MCF 10A (cell line): ENCODE measurements at regions of chr14 and their contacts with region 1.

Region 1: DNA sequence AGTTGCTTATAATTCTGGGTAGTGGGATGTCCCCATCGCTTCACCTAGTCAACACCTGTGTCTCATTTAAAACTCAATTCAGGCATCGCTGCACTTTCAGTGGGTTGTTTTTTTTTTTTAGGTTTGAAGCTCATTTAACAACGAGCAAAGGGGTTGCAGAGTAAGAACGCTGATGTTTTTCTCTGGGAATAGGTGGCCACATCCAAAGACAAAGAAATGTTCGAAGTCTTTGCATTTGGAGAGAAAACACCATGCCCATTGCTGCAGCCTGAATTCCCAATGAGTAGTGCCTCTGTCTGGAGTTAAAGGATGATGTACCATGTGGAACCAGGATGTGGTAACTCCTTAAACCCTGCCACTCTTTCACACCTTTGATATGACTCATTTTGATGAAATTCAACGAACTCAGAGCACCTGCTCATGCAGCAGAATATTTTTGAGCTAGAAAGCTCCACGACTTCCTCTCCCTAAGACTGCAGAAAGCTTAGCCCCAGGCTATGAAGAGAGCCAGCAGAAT is 35.1 kb upstream of the BATF start:
- DNase-seq: peak; percentile 72
- H3K4me3 Mint-ChIP-seq: no peak overlapping the region
- H3K27ac Mint-ChIP-seq: no peak overlapping the region
- H3K4me1 Mint-ChIP-seq: peaks cover 23% of the 10 kb centered on the region
- H3K27me3 Mint-ChIP-seq: no peaks in the 10 kb centered on the region
- CTCF ChIP-seq: no peak

Region 2: GRCh38 chr14:75126679-75127473 is 360.3 kb before region 1 on chr14 and contains the start of gene NEK9:
- CTCF ChIA-PET with region 1: interaction called, 10 read pairs
- POLR2A ChIA-PET with region 1: no interaction called
- intact Hi-C with region 1: loop called (anchors 10 kb)
- DNase-seq: peak; percentile 88
- H3K4me3 Mint-ChIP-seq: peak within 1 kb of the TSS; percentile 72
- H3K27ac Mint-ChIP-seq: peak within 1 kb of the TSS; percentile 99
- H3K4me1 Mint-ChIP-seq: peaks cover 33% of the 10 kb centered on the region
- H3K27me3 Mint-ChIP-seq: no peaks in the 10 kb centered on the region
- CTCF ChIP-seq: no peak
- total RNA-seq, gene NEK9: 112 and 113 TPM in 2 replicates

Region 3: GRCh38 chr14:75132382-75133086 is 354.7 kb before region 1 on chr14:
- CTCF ChIA-PET with region 1: interaction called, 10 read pairs
- POLR2A ChIA-PET with region 1: interaction called, 5 read pairs
- intact Hi-C with region 1: loop called (anchors 10 kb)
- DNase-seq: peak; percentile 83
- H3K4me3 Mint-ChIP-seq: no peak overlapping the region
- H3K27ac Mint-ChIP-seq: peak overlapping the region; percentile 77
- H3K4me1 Mint-ChIP-seq: peaks cover 33% of the 10 kb centered on the region
- H3K27me3 Mint-ChIP-seq: no peaks in the 10 kb centered on the region
- CTCF ChIP-seq: peak; percentile 67

Region 4: GRCh38 chr14:75427482-75428229 is 59.6 kb before region 1 on chr14 and contains the start of gene JDP2:
- CTCF ChIA-PET with region 1: interaction called, 9 read pairs
- POLR2A ChIA-PET with region 1: no interaction called
- intact Hi-C with region 1: loop called (anchors 10 kb)
- DNase-seq: peak; percentile 62
- H3K4me3 Mint-ChIP-seq: peak within 1 kb of the TSS; percentile 76
- H3K27ac Mint-ChIP-seq: no peak within 1 kb of the TSS
- H3K4me1 Mint-ChIP-seq: peaks cover 17% of the 10 kb centered on the region
- H3K27me3 Mint-ChIP-seq: no peaks in the 10 kb centered on the region
- CTCF ChIP-seq: no peak
- total RNA-seq, gene JDP2: 38.9 and 45.3 TPM in 2 replicates

Region 5: GRCh38 chr14:75452900-75453747 is 34.1 kb before region 1 on chr14:
- CTCF ChIA-PET with region 1: interaction called, 9 read pairs
- POLR2A ChIA-PET with region 1: interaction called, 10 read pairs
- intact Hi-C with region 1: loop called (anchors 1 kb)
- DNase-seq: peak; percentile 91
- H3K4me3 Mint-ChIP-seq: peak overlapping the region; percentile 11
- H3K27ac Mint-ChIP-seq: peak overlapping the region; percentile 69
- H3K4me1 Mint-ChIP-seq: peaks cover 67% of the 10 kb centered on the region
- H3K27me3 Mint-ChIP-seq: no peaks in the 10 kb centered on the region
- CTCF ChIP-seq: no peak